ENCODE measurements at regions of chr11 and their contacts with region 1.

Region 1: DNA sequence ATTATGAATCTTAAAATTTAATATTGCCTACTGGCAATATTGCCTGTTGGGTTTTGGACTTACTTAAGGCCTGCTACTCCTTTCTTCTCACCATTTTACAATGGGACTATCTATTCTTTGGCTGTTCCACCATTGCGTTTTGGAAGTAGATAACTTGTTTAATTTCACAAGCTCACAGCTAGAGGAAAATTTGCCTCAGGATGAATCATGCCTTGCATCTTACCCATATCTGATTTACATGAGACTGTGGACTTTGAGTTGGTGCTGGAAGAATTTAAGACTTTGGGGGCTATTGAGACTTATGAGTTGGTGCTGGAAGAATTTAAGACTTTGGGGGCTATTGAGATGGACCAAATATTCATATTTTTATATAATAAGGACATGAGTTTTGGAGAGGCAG is 662.6 kb downstream of the METTL15 start:
- DNase-seq: no peak

Region 2: DNA sequence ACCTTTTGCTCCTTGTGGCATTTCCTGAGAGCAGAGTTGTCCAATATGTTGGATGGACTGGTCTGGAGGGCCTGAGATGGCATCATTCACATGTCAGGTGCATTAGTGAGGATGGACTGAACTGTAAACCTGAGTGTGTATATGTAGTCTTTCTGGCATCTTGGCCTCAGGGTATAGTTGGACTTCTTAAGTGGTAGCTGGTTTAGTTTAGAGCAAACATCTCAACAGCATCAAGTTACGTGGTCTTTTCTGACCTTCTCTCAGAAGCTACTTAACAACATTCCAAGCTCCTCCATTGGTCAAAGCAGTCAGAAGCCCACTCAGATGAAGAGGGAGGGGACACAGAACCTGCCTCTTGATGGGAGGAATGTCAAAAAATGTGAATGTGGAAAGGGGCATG is 167.3 kb after region 1 on chr11:
- intact Hi-C with region 1: no loop called
- DNase-seq: no peak

Region 3: GRCh38 chr11:28999620-29000019 is 228.8 kb after region 1 on chr11:
- intact Hi-C with region 1: no loop called
- DNase-seq: no peak

Region 4: DNA sequence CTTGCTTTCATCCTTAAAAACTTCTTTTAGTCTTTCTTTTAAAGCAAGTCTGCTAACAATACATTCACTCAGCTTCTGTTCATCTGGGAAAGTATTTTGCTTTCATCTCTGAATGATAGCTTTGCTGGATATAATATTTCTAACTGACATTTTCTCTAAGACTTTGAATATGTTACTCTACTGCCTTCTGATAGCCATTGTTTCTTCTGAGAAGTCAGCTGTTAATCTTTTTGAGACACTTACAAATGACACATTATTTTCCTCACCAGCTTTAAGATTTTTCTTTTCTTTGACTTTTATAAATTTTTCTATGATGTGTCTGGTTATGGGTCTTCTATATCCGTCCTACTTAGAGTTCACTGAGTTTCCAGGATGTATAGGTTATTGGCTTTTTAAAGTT is 602.9 kb after region 1 on chr11:
- intact Hi-C with region 1: loop called in 1 of 2 experiments (anchors 5 kb)
- DNase-seq: no peak

Measured in posterior vena cava (tissue), 2 donors.